ENCODE measurements at regions of chr10 and their contacts with region 1.

Region 1: DNA sequence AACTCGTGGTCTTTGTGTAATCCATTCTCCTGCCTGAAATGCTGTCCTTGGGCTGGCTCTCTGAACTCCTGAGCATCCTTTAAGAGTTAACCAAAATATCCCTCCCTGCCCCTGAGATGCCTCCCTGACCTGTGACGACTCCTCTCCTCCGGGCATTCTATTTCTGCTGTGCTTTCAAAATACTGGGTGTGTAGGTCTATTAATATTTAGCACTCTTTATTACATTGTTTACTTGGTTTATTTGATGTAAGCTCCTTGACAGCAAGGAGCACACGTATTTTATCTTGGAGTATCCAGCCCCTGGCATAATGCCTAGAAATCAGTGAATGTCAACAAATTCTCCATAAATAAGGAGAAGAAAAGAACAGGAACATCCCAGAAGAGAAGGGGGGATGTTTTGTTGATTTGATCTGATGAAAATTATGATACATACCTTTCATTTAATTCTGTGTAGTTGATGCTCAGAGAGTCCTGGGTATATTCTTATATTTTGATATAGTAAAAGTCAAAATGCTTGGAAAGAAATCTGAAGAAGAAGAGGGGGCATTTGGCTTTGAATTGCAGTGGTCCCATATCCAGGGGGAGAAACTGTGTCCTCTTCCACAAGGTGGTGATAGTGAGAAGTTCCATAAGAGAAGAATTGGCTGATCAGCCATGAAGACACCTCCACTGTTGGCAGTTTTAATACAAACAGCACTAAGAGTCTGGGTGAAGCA is 107.7 kb upstream of the MPP7 start:
- DNase-seq: no peak
- H3K4me3 Mint-ChIP-seq: no peak overlapping the region
- H3K27ac Mint-ChIP-seq: no peak overlapping the region
- H3K4me1 Mint-ChIP-seq: peaks cover 11% of the 10 kb centered on the region
- H3K27me3 Mint-ChIP-seq: peaks cover 15% of the 10 kb centered on the region

Region 2: DNA sequence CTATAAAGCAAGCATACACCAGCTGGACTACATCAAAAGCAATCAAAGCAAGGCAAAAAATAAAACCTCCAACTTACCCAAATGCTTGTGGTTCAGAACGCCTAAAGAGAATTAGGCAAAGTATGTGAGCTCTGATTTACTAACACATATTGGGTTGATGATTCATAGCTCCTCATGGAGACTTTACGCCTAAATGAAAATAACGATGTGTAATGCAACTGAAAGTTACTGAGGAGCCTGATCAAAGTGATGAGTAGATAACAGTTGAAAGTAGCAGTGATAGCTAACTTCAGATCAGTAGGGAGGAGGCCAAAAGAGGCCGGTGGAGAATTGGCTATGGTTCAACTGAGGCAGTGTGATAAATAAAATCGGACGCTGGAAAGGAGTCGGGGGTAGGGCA is 192.7 kb before region 1 on chr10:
- CTCF ChIA-PET with region 1: no interaction called
- intact Hi-C with region 1: loop called (anchors 1 kb)
- DNase-seq: peak; percentile 45
- H3K4me3 Mint-ChIP-seq: no peak overlapping the region
- H3K27ac Mint-ChIP-seq: no peak overlapping the region
- H3K4me1 Mint-ChIP-seq: peaks cover 48% of the 10 kb centered on the region
- H3K27me3 Mint-ChIP-seq: no peaks in the 10 kb centered on the region

Region 3: GRCh38 chr10:28367929-28368484 is 42.6 kb before region 1 on chr10:
- CTCF ChIA-PET with region 1: no interaction called
- intact Hi-C with region 1: loop called (anchors 1 kb)
- DNase-seq: peak; percentile 78
- H3K4me3 Mint-ChIP-seq: peak overlapping the region; percentile 49
- H3K27ac Mint-ChIP-seq: peak overlapping the region; percentile 91
- H3K4me1 Mint-ChIP-seq: peaks cover 44% of the 10 kb centered on the region
- H3K27me3 Mint-ChIP-seq: no peaks in the 10 kb centered on the region

Region 4: GRCh38 chr10:28393966-28394568 is 16.5 kb before region 1 on chr10:
- CTCF ChIA-PET with region 1: interaction called, 14 read pairs
- intact Hi-C with region 1: no loop called
- DNase-seq: peak; percentile 83
- H3K4me3 Mint-ChIP-seq: no peak overlapping the region
- H3K27ac Mint-ChIP-seq: no peak overlapping the region
- H3K4me1 Mint-ChIP-seq: peaks cover 4% of the 10 kb centered on the region
- H3K27me3 Mint-ChIP-seq: no peaks in the 10 kb centered on the region

Region 5: DNA sequence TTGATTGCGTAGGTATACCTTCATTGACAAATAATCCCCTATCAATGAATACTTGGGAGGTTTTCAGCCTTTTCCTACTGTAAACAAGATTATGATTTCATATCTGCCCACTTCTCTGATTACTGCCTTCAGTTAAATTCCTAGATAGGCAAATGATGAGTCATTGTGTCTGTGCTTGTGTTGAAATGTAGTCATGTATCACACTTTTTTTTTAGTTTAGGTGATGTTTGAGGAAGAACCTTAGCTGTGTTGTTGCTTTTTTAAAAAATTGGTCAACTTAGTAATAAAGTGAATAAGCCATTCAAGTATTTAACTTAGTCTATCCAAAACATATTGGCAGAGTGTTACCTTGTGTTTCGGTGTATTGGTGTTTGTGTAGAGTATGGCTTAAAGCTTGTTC is 182.4 kb after region 1 on chr10:
- CTCF ChIA-PET with region 1: no interaction called
- intact Hi-C with region 1: loop called (anchors 5 kb)
- DNase-seq: no peak
- H3K4me3 Mint-ChIP-seq: no peak overlapping the region
- H3K27ac Mint-ChIP-seq: peak overlapping the region; percentile 10
- H3K4me1 Mint-ChIP-seq: peaks cover 51% of the 10 kb centered on the region
- H3K27me3 Mint-ChIP-seq: no peaks in the 10 kb centered on the region

Measured in activated naive CD4-positive, alpha-beta T cell treated with anti-CD3 and anti-CD28 coated beads for 36 hours (primary cell).